ENCODE measurements at regions of chr17 and their contacts with region 1.

Region 1: DNA sequence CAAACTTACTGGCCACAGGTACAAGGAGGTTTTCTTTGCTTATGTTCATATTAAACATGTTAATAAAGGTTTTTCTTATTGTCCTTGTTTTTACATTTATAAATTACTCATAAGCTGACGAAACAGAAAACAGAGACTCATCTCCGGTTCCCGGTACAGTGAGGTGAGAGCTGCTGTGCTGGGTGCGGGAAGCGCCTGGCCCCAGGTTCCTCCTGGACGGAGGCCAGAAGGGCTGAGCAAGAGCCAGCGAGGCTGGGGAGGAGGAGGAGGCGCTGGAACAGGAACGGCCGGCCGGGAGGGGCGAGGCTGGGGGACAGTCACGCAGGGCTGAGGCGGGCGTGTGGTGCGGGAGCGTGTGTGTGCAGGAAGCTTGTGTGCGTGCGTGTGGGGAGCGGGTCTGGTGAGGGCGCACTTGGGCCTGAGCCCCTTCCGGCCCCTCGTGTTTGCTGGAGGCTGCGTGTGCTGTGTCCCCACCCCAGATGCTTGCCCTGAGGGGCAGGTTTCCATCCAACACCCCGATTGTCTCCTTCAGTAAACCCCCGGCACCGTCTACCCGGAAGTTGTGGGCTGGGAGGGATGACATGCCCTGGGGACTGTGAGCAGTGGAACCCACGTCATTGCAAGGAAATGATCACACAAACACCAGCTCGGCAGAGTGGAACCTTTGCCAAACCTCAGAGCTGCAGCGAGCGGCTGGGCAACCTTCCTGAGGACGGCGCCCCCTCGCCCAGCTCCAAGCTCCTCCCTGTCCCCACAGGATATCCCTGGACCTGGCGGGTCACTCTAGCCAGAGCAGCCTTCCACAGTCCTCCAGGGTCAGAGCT is 19.5 kb downstream of the CD7 start:
- DNase-seq: peak; percentile 90
- H3K4me3 ChIP-seq: peak overlapping the region; percentile 40 to 52
- H3K27ac ChIP-seq: peak overlapping the region; percentile 77 to 84
- H3K4me1 ChIP-seq: peaks cover 28 to 37% of the 10 kb centered on the region in 2 experiments; a peak in 3 of 4 replicates
- H3K27me3 ChIP-seq: no peaks in the 10 kb centered on the region
- CTCF ChIP-seq: peak; percentile 18; the same call in 1 of the 2 replicates
- EP300 ChIP-seq: no peak; a peak in 1 of 4 replicates
- RAD21 ChIP-seq: no peak

Region 2: GRCh38 chr17:81902023-81902652 is 395.8 kb before region 1 on chr17 and contains the start of gene NPB:
- CTCF ChIA-PET with region 1: no interaction called
- POLR2A ChIA-PET with region 1: no interaction called
- DNase-seq: peak; percentile 92
- H3K4me3 ChIP-seq: peak within 1 kb of the TSS in 1 of 2 experiments; percentile 33; a peak in 2 of 4 replicates
- H3K27ac ChIP-seq: no peak within 1 kb of the TSS
- H3K4me1 ChIP-seq: peaks cover 3 to 10% of the 10 kb centered on the region in 2 experiments; a peak in 1 of 4 replicates
- H3K27me3 ChIP-seq: no peaks in the 10 kb centered on the region
- CTCF ChIP-seq: no peak
- EP300 ChIP-seq: no peak
- RAD21 ChIP-seq: no peak
- polyA plus RNA-seq, gene NPB: 0.91 and 2.4 TPM in 2 replicates

Region 3: DNA sequence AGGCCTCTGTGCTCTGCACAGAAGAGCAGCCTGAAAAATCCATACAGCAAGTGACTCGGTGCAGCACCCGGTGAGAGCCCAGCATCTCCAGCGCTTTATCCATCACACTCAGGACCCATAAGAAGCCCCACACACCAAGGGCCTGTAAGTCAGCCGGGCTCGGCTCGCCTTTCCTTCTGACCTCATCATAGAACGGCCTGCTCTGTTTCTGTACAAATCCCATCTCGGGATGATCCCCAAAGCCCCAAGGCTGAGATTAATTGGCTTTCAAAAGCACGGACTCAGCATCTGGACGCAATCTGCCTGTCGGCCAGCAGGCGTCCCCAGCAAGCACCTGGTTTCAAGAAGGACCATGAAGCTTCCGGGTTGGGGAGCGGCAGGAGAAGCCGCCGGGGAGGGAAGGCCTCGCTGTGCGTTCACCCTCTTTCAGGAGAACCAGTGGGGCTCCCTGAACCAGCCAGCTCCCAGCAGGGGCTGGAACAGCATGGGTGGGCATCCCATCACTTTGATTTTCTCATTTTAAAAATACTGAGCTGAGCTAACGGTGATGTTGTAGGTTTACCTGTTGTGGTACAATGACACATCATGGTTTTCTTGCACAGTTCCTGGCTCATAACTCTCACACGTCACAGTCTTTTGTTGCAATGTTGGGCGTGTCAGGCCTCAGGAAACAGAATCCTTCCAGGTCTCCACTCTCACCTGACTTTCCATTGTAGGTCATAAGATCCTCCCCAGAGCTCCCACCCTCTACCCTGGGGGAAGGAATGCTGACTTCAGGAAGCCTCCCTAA is 92.0 kb before region 1 on chr17:
- CTCF ChIA-PET with region 1: interaction called, 11 read pairs
- POLR2A ChIA-PET with region 1: no interaction called
- DNase-seq: peak; percentile 92
- H3K4me3 ChIP-seq: peak overlapping the region in 1 of 2 experiments; percentile 8; a peak in 1 of 4 replicates
- H3K27ac ChIP-seq: peak overlapping the region; percentile 64 to 70
- H3K4me1 ChIP-seq: peaks cover 15 to 19% of the 10 kb centered on the region in 2 experiments; a peak in 3 of 4 replicates
- H3K27me3 ChIP-seq: no peaks in the 10 kb centered on the region
- CTCF ChIP-seq: peak; percentile 97
- EP300 ChIP-seq: no peak
- RAD21 ChIP-seq: peak; percentile 64

Region 4: GRCh38 chr17:82283208-82283749 is 14.6 kb before region 1 on chr17:
- CTCF ChIA-PET with region 1: interaction called, 14 read pairs
- POLR2A ChIA-PET with region 1: interaction called, 48 read pairs
- DNase-seq: peak; percentile 96
- H3K4me3 ChIP-seq: no peak overlapping the region
- H3K27ac ChIP-seq: peak overlapping the region in 1 of 2 experiments; percentile 39; a peak in 1 of 4 replicates
- H3K4me1 ChIP-seq: peaks cover 23 to 27% of the 10 kb centered on the region in 2 experiments; a peak in 3 of 4 replicates
- H3K27me3 ChIP-seq: no peaks in the 10 kb centered on the region
- CTCF ChIP-seq: no peak
- EP300 ChIP-seq: peak in 1 of 2 experiments; percentile 69; a peak in 3 of 4 replicates
- RAD21 ChIP-seq: no peak; the same call in 1 of the 2 replicates

Region 5: DNA sequence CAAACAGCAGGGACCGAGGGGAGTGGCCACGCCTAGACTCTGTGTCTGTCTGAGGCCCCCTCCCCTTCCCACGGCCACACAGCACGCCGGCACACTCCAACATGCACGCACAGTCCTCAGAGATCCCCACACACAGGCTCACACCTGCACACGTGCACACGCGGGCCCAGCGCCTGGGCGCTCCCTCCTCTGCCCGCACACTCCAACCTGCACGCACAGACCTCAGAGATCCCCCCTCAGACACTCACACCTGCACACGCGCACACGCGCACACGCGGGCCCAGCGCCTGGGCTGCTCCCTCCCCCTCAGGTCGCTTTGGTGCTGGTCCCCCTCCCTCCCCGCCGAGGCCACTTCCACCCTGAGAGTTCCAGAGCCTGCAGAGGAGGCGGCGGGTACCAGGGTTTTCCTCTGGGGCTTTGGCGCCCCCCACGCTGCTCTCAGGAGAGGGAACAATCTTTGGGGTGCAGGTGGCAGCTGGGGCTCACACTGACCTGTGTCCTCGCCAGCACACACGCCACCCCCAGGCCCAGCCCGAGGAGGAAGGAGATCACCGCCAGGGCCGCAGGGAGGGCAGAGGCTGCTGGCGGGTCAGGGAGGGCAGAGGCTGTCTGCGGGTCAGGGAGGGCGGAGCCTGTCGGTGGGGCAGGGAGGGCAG is 17.9 kb after region 1 on chr17:
- CTCF ChIA-PET with region 1: interaction called, 184 read pairs
- POLR2A ChIA-PET with region 1: interaction called, 3 read pairs
- DNase-seq: no peak
- H3K4me3 ChIP-seq: no peak overlapping the region
- H3K27ac ChIP-seq: no peak overlapping the region
- H3K4me1 ChIP-seq: peaks cover under 1 to 9% of the 10 kb centered on the region in 2 experiments; a peak in 3 of 4 replicates
- H3K27me3 ChIP-seq: peaks cover 5% of the 10 kb centered on the region; the same call in 1 of the 2 replicates
- CTCF ChIP-seq: no peak
- EP300 ChIP-seq: no peak
- RAD21 ChIP-seq: no peak

Region 6: DNA sequence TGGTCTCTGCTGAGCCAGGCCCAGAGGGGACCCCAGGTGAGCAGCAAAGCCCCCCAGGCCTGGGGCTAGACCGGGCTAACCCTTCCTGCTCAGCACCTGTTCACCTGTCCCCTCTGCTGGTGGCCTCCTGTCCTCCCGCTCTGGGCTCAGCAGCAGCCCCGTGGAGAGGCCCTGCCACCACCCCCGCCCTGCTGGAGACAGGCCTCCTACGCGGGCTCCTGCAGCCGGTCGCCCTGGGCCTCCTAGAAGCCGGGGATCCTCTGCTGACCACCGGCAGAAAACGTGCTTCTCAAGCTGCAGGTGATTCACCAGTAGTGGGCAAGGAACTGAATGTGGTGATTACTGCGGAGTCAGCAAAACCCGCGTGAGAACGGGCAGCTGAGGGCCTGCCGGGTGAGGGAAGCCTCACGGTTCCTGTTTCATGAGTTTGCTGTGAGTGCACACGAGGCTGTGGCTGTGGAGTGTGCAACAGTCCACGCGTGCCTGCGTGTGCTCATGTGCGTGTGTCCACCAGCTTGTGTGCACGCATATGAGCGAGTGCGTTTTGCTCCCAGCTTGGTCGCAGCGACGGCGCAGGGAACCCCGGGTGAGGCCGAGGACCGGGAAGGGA is 34.8 kb after region 1 on chr17:
- CTCF ChIA-PET with region 1: interaction called, 184 read pairs
- POLR2A ChIA-PET with region 1: interaction called, 4 read pairs
- DNase-seq: peak; percentile 78
- H3K4me3 ChIP-seq: peak overlapping the region; percentile 13 to 31; a peak in 2 of 4 replicates
- H3K27ac ChIP-seq: no peak overlapping the region
- H3K4me1 ChIP-seq: peaks cover 18 to 45% of the 10 kb centered on the region in 2 experiments; a peak in 3 of 4 replicates
- H3K27me3 ChIP-seq: no peaks in the 10 kb centered on the region; the same call in none of the 2 replicates
- CTCF ChIP-seq: no peak
- EP300 ChIP-seq: no peak
- RAD21 ChIP-seq: no peak

Region 7: GRCh38 chr17:82418001-82418986 is 120.4 kb after region 1 on chr17 and contains the starts of genes HEXD and OGFOD3:
- CTCF ChIA-PET with region 1: interaction called, 54 read pairs
- POLR2A ChIA-PET with region 1: no interaction called
- DNase-seq: peak; percentile 100
- H3K4me3 ChIP-seq: peak within 1 kb of the TSS; percentile 71 to 94
- H3K27ac ChIP-seq: peak within 1 kb of the TSS; percentile 45 to 90; a peak in 3 of 4 replicates
- H3K4me1 ChIP-seq: peaks cover 0 to 3% of the 10 kb centered on the region in 2 experiments; a peak in 2 of 4 replicates
- H3K27me3 ChIP-seq: no peaks in the 10 kb centered on the region
- CTCF ChIP-seq: no peak
- EP300 ChIP-seq: no peak; a peak in 1 of 4 replicates
- RAD21 ChIP-seq: no peak
- polyA plus RNA-seq, gene HEXD: 38.8 and 43.1 TPM in 2 replicates
- polyA plus RNA-seq, gene OGFOD3: 57.1 and 68.2 TPM in 2 replicates

Region 8: DNA sequence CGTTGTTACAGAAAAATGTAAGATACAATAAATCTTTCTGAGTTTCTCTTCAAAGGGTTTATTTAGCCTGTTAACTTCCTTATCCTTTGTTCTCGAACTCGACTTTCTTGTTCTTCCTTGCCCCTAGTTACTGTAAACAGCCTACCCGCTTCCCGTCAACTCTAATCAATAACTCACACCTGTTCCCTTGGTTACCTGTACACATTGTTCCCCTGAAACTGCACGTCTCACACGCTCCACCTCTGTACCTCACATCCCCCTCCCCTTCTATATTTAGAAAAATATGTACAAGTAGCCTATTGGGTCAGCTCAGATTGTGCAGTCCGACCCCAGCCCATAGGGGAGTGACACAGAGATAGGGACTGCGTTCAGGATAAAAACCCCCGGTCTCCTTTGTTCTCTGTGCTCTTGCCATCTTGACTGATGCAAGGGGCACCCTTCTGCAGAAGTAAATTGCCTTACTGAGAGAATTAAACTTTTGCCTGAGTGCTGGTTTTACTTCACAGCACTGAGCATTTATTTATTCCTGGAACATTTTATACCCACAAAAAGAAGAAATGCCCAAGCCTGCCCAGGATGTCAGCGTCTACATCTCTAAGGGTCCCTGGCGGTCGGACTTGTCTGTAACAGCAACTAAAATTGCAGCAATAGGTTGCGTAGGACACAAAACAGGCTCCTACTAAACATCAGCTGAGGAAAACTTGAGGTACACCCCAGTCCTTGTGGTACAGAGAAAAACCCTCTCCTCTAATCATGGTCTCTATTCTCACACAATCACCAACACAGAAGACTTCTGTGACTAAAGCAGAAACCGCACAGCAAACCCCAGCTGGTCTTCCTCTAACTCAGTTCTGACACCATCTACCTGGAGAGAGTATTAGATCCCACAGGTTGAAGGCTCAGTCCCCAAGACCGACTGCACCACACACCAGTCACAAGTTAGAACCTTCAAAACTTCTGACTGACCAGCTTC is 339.0 kb after region 1 on chr17:
- CTCF ChIA-PET with region 1: no interaction called
- POLR2A ChIA-PET with region 1: no interaction called
- DNase-seq: no peak
- H3K4me3 ChIP-seq: no peak overlapping the region
- H3K27ac ChIP-seq: no peak overlapping the region
- H3K4me1 ChIP-seq: no peaks in the 10 kb centered on the region
- H3K27me3 ChIP-seq: no peaks in the 10 kb centered on the region
- CTCF ChIP-seq: no peak
- EP300 ChIP-seq: no peak
- RAD21 ChIP-seq: no peak

Measured in SK-N-SH (cell line).